K562 (cell line): ENCODE measurements at regions of chr1 and their contacts with region 1.

Region 1: GRCh38 chr1:196856053-196856452 is 31.8 kb upstream of the CFHR4 start:
- DNase-seq: no peak
- ATAC-seq: peak; percentile 61
- H3K4me3 ChIP-seq: no peak overlapping the region
- H3K27ac ChIP-seq: no peak overlapping the region
- H3K4me1 ChIP-seq: no peaks in the 10 kb centered on the region
- H3K27me3 ChIP-seq: no peaks in the 10 kb centered on the region
- CTCF ChIP-seq: no peak
- EP300 ChIP-seq: no peak
- POLR2A ChIP-seq: no peak
- RAD21 ChIP-seq: no peak

Region 2: GRCh38 chr1:196738730-196739129 is 117.3 kb before region 1 on chr1:
- CTCF ChIA-PET with region 1: no interaction called
- POLR2A ChIA-PET with region 1: no interaction called
- in situ Hi-C with region 1: no loop called
- intact Hi-C with region 1: loop called (anchors 5 kb)
- DNase-seq: no peak
- ATAC-seq: no peak
- H3K4me3 ChIP-seq: no peak overlapping the region
- H3K27ac ChIP-seq: no peak overlapping the region
- H3K4me1 ChIP-seq: no peaks in the 10 kb centered on the region
- H3K27me3 ChIP-seq: no peaks in the 10 kb centered on the region
- CTCF ChIP-seq: no peak
- EP300 ChIP-seq: no peak
- POLR2A ChIP-seq: no peak
- RAD21 ChIP-seq: no peak